SK-N-SH (cell line): ENCODE measurements at regions of chr2 and their contacts with region 1.

Region 1: DNA sequence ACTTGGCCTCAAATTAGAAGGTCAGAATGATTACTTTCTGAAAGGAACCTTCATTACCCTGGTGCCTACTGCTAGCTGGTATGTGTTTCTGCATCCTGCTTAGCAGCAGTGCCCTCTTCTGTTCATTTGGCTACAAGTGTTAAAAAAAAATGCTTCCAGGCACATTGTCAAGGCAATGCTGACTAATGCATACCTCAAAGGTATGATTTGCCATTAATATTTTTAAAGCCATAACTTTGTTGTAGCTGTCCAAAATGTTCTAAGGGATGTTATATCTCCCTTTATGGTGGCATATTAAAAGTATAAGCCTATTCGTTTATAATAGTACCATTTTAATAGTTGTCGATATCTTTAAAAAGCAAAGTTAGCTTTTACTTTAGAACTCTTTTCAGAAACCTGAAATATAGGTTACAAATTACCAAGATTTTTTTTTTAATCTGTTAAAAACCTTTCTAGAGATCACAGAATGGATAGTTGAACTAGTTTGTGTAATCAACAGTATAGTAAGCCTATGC is 52.0 kb upstream of the FAM171B start:
- DNase-seq: peak; percentile 56
- H3K4me3 ChIP-seq: no peak overlapping the region
- H3K27ac ChIP-seq: no peak overlapping the region
- H3K4me1 ChIP-seq: peaks cover 0 to 12% of the 10 kb centered on the region in 2 experiments; a peak in 1 of 4 replicates
- H3K27me3 ChIP-seq: no peaks in the 10 kb centered on the region
- CTCF ChIP-seq: peak; percentile 89
- EP300 ChIP-seq: no peak
- RAD21 ChIP-seq: peak; percentile 96

Region 2: GRCh38 chr2:186460465-186460864 is 181.4 kb before region 1 on chr2:
- CTCF ChIA-PET with region 1: interaction called, 10 read pairs
- POLR2A ChIA-PET with region 1: no interaction called
- DNase-seq: peak; percentile 16
- H3K4me3 ChIP-seq: no peak overlapping the region
- H3K27ac ChIP-seq: no peak overlapping the region
- H3K4me1 ChIP-seq: no peaks in the 10 kb centered on the region; a peak in 2 of 4 replicates
- H3K27me3 ChIP-seq: no peaks in the 10 kb centered on the region
- CTCF ChIP-seq: peak; percentile 61
- EP300 ChIP-seq: no peak
- RAD21 ChIP-seq: peak; percentile 80

Region 3: GRCh38 chr2:186498838-186499237 is 143.0 kb before region 1 on chr2:
- CTCF ChIA-PET with region 1: interaction called, 128 read pairs
- POLR2A ChIA-PET with region 1: interaction called, 3 read pairs
- DNase-seq: no peak
- H3K4me3 ChIP-seq: no peak overlapping the region
- H3K27ac ChIP-seq: no peak overlapping the region
- H3K4me1 ChIP-seq: no peaks in the 10 kb centered on the region
- H3K27me3 ChIP-seq: no peaks in the 10 kb centered on the region
- CTCF ChIP-seq: no peak
- EP300 ChIP-seq: no peak
- RAD21 ChIP-seq: no peak

Region 4: DNA sequence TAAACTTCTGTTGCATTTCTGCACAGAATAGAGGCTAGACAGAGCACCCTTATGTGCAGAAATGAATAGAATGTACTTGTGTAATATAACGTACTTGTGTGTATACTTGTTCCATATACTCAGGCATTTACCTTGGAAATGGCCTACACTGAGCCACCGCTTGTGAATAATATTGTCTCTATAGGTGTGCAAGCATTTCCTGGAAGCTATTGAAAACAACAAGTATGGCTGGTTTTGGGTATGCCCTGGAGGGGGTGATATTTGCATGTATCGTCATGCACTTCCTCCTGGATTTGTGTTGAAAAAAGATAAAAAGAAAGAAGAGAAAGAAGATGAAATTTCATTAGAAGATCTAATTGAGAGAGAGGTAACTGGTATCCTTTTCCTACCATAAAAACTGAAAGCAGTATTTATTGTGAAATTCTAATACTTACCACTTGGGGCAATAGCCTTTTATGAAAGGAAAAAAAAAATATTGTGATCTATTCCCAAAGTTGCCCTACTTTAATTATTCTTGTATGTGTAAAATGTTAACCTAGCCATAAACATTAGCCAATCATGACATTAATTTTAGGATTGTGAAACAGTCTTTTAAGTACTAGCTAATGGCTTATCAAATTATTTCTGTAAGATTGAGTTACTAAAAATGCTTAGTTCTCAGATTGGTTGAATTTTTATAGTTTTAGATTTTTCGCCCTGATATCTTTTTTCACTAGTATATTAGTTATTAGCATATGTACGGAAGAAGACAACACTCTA is 137.8 kb before region 1 on chr2:
- CTCF ChIA-PET with region 1: interaction called, 128 read pairs
- POLR2A ChIA-PET with region 1: interaction called, 3 read pairs
- DNase-seq: peak; percentile 29
- H3K4me3 ChIP-seq: no peak overlapping the region; a peak in 1 of 4 replicates
- H3K27ac ChIP-seq: peak overlapping the region in 1 of 2 experiments; percentile 6; a peak in 2 of 4 replicates
- H3K4me1 ChIP-seq: no peaks in the 10 kb centered on the region
- H3K27me3 ChIP-seq: no peaks in the 10 kb centered on the region
- CTCF ChIP-seq: peak; percentile 79
- EP300 ChIP-seq: no peak
- RAD21 ChIP-seq: peak; percentile 68

Region 5: GRCh38 chr2:186518945-186519344 is 122.9 kb before region 1 on chr2:
- CTCF ChIA-PET with region 1: interaction called, 23 read pairs
- POLR2A ChIA-PET with region 1: no interaction called
- DNase-seq: no peak
- H3K4me3 ChIP-seq: no peak overlapping the region
- H3K27ac ChIP-seq: no peak overlapping the region
- H3K4me1 ChIP-seq: peaks cover 5 to 8% of the 10 kb centered on the region in 2 experiments; a peak in 2 of 4 replicates
- H3K27me3 ChIP-seq: no peaks in the 10 kb centered on the region
- CTCF ChIP-seq: no peak
- EP300 ChIP-seq: no peak
- RAD21 ChIP-seq: no peak

Region 6: GRCh38 chr2:186559848-186560247 is 82.0 kb before region 1 on chr2:
- CTCF ChIA-PET with region 1: no interaction called
- POLR2A ChIA-PET with region 1: no interaction called
- DNase-seq: no peak
- H3K4me3 ChIP-seq: no peak overlapping the region
- H3K27ac ChIP-seq: no peak overlapping the region
- H3K4me1 ChIP-seq: peaks cover 0 to 5% of the 10 kb centered on the region in 2 experiments; a peak in 2 of 4 replicates
- H3K27me3 ChIP-seq: no peaks in the 10 kb centered on the region
- CTCF ChIP-seq: no peak
- EP300 ChIP-seq: no peak
- RAD21 ChIP-seq: no peak

Region 7: GRCh38 chr2:186589612-186590349 is 52.1 kb before region 1 on chr2 and contains the start of gene ITGAV:
- CTCF ChIA-PET with region 1: interaction called, 14 read pairs
- POLR2A ChIA-PET with region 1: no interaction called
- DNase-seq: peak; percentile 93
- H3K4me3 ChIP-seq: peak within 1 kb of the TSS; percentile 92 to 93
- H3K27ac ChIP-seq: peak within 1 kb of the TSS; percentile 95 to 98
- H3K4me1 ChIP-seq: peaks cover 12 to 17% of the 10 kb centered on the region in 2 experiments; a peak in 3 of 4 replicates
- H3K27me3 ChIP-seq: no peaks in the 10 kb centered on the region
- CTCF ChIP-seq: no peak
- EP300 ChIP-seq: peak in 1 of 2 experiments; percentile 50; a peak in 1 of 4 replicates
- RAD21 ChIP-seq: no peak
- polyA plus RNA-seq, gene ITGAV: 24.3 and 35.1 TPM in 2 replicates

Region 8: DNA sequence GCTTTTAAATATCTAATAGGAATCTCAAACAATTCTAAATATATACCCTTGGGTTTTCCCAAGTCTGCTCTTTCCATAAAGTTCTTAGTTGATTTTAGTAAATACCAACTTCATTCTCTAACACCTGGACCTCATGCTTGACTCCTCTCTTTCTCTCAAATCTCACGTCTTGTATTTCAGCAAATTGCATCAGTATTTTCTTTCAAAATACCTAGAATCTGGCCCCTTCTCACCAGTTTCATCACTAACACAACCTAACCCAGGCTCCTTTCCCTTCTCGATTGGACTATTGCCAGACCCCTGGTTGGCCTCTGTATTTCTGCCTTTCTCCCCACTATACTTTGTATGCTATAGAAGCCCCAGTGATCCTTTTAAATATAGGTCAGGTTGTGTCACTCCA is 29.0 kb after region 1 on chr2:
- CTCF ChIA-PET with region 1: interaction called, 13 read pairs
- POLR2A ChIA-PET with region 1: no interaction called
- DNase-seq: no peak
- H3K4me3 ChIP-seq: no peak overlapping the region
- H3K27ac ChIP-seq: no peak overlapping the region
- H3K4me1 ChIP-seq: no peaks in the 10 kb centered on the region
- H3K27me3 ChIP-seq: no peaks in the 10 kb centered on the region
- CTCF ChIP-seq: no peak
- EP300 ChIP-seq: no peak
- RAD21 ChIP-seq: no peak

Region 9: DNA sequence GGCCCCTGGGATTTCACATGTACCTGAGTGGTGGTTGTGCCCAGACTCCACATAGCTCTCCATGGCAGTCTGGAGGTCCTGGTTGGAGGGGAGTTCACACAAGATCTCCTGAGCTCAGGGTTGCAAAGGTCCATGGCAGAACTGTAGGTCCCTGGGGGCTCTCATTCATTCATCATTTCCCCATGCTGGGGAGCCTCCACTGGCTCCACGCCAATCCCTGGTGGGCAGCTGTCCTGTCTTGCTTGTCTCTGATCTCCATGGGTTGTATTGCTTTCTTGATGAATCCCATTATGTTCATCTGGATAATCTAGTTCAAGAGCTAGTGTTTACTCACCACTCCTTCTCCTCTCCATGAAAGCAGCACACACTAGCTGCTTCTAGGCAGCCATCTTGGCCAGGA is 164.7 kb after region 1 on chr2:
- CTCF ChIA-PET with region 1: no interaction called
- POLR2A ChIA-PET with region 1: no interaction called
- DNase-seq: no peak
- H3K4me3 ChIP-seq: no peak overlapping the region
- H3K27ac ChIP-seq: no peak overlapping the region
- H3K4me1 ChIP-seq: no peaks in the 10 kb centered on the region
- H3K27me3 ChIP-seq: no peaks in the 10 kb centered on the region
- CTCF ChIP-seq: no peak
- EP300 ChIP-seq: no peak
- RAD21 ChIP-seq: no peak